RWPE1 (cell line): ENCODE measurements at regions of chr5 and their contacts with region 1.

Region 1: DNA sequence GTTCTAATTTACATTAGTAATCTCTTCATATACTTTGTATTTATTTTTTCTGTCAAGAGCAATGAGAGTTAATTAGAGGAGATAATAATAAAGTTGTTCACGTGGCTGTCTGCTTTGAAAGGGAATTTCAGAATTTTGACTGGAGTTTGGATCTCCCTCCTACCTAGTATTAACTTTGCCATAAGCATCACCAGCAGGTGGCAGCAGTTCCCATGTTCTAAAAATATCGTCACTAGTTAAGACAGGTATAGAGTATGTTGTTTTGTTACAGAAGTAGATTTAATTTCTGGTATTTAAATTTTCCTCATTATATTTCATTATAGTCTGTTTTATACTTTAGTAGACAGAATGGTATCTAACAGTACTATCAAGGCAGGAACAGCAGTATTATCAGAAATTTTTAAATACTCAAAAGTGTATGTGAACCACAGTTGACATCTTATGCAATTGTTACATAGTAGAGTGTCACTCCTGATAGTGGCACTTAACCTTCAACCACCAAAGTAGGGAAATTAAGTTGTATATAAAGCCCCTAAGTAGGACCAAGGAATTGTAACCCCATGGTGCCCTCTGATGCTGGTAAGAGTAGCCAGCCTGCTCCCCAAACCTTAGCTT is 20.4 kb downstream of the GNPDA1 start:
- DNase-seq: peak; percentile 71
- H3K27ac ChIP-seq: no peak overlapping the region
- CTCF ChIP-seq: peak; percentile 91

Region 2: GRCh38 chr5:142012792-142013388 is 20.4 kb after region 1 on chr5 and contains the start of gene GNPDA1:
- CTCF ChIA-PET with region 1: interaction called, 4 read pairs
- POLR2A ChIA-PET with region 1: interaction called, 12 read pairs
- DNase-seq: peak; percentile 95
- H3K27ac ChIP-seq: peak within 1 kb of the TSS; percentile 77
- CTCF ChIP-seq: peak; percentile 25

Region 3: GRCh38 chr5:142143878-142144277 is 151.4 kb after region 1 on chr5:
- CTCF ChIA-PET with region 1: interaction called, 19 read pairs
- POLR2A ChIA-PET with region 1: no interaction called
- DNase-seq: peak; percentile 67
- H3K27ac ChIP-seq: no peak overlapping the region
- CTCF ChIP-seq: peak; percentile 64